Posterior cingulate gyrus (tissue), 11 donors: ENCODE measurements at regions of chr16 and their contacts with region 1.

Region 1: GRCh38 chr16:17467923-17468540 is 2.7 kb downstream of the XYLT1 start:
- DNase-seq: peak; percentile 68 to 97 (median 85)

Region 2: GRCh38 chr16:16861546-16861945 is 606.5 kb before region 1 on chr16:
- intact Hi-C with region 1: loop called (anchors 5 kb)
- DNase-seq: peak in 9 of 10 donors; percentile 26 to 92 (median 66)

Region 3: DNA sequence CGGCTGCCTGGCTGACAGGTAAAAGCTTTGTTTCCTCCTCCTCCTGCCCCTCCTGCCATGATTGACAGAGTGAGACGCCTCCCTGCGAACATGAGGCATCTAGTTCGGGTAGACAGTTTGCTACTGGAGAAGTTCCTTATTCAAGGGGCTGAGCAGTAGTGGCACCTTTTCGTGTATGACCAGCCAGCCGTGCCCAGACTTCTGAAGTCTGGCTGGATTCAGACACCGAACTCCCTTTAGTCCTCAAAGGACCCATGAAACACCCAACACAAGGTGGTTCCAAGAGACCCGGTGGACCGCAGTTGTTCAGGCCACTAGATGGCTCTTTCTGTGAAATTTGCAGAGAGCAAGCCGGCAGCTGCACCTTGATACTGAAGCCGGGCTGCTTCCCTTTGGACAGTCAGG is 190.1 kb before region 1 on chr16:
- intact Hi-C with region 1: loop called (anchors 1 kb)
- DNase-seq: peak in 8 of 10 donors; percentile 24 to 91 (median 52)